T-cell (primary cell): ENCODE measurements at regions of chr1 and their contacts with region 1.

Region 1: GRCh38 chr1:93888896-93889295 is 9.9 kb upstream of the DNTTIP2 start:
- DNase-seq: no peak
- ATAC-seq: no peak
- H3K4me3 ChIP-seq: no peak overlapping the region
- H3K4me3 Mint-ChIP-seq: no peak overlapping the region
- H3K27ac ChIP-seq: no peak overlapping the region
- H3K27ac Mint-ChIP-seq: no peak overlapping the region
- H3K4me1 ChIP-seq: no peaks in the 10 kb centered on the region
- H3K4me1 Mint-ChIP-seq: no peaks in the 10 kb centered on the region
- H3K27me3 ChIP-seq: no peaks in the 10 kb centered on the region
- H3K27me3 Mint-ChIP-seq: no peaks in the 10 kb centered on the region

Region 2: GRCh38 chr1:93519196-93519827 is 369.6 kb before region 1 on chr1:
- CTCF ChIA-PET with region 1: no interaction called
- POLR2A ChIA-PET with region 1: interaction called in 1 of 2 experiments, 13 read pairs
- DNase-seq: no peak
- ATAC-seq: no peak
- H3K4me3 ChIP-seq: no peak overlapping the region
- H3K4me3 Mint-ChIP-seq: no peak overlapping the region
- H3K27ac ChIP-seq: no peak overlapping the region
- H3K27ac Mint-ChIP-seq: no peak overlapping the region
- H3K4me1 ChIP-seq: no peaks in the 10 kb centered on the region
- H3K4me1 Mint-ChIP-seq: no peaks in the 10 kb centered on the region
- H3K27me3 ChIP-seq: no peaks in the 10 kb centered on the region
- H3K27me3 Mint-ChIP-seq: peaks cover 0 to 1% of the 10 kb centered on the region in 2 donors

Region 3: GRCh38 chr1:93904228-93904627 is 15.3 kb after region 1 on chr1:
- CTCF ChIA-PET with region 1: interaction called, 4 to 7 read pairs
- POLR2A ChIA-PET with region 1: interaction called, 3 to 16 read pairs
- DNase-seq: peak in 1 of 35 experiments; percentile 38
- ATAC-seq: no peak
- H3K4me3 ChIP-seq: no peak overlapping the region
- H3K4me3 Mint-ChIP-seq: peak overlapping the region in 2 of 3 donors; percentile 1 to 10
- H3K27ac ChIP-seq: peak overlapping the region; percentile 65
- H3K27ac Mint-ChIP-seq: peak overlapping the region; percentile 83 to 86
- H3K4me1 ChIP-seq: peaks cover 4 to 8% of the 10 kb centered on the region in 2 experiments
- H3K4me1 Mint-ChIP-seq: peaks cover 36 to 43% (median 39%) of the 10 kb centered on the region in 3 donors
- H3K27me3 ChIP-seq: no peaks in the 10 kb centered on the region
- H3K27me3 Mint-ChIP-seq: no peaks in the 10 kb centered on the region